ENCODE measurements at regions of chr11 and their contacts with region 1.

Region 1: GRCh38 chr11:8682303-8683114 is at the starts of genes RPL27A and TRIM66:
- DNase-seq: peak; percentile 95 to 99
- H3K4me3 ChIP-seq: peak within 1 kb of the TSS; percentile 86 to 91
- H3K27ac ChIP-seq: peak within 1 kb of the TSS; percentile 91 to 97
- H3K4me1 ChIP-seq: peaks cover 4 to 28% (median 21%) of the 10 kb centered on the region in 4 donors
- H3K27me3 ChIP-seq: no peaks in the 10 kb centered on the region
- CTCF ChIP-seq: peak in 1 of 2 experiments; percentile 40

Region 2: GRCh38 chr11:8138526-8138925 is 544.0 kb before region 1 on chr11:
- intact Hi-C with region 1: no loop called
- DNase-seq: no peak
- H3K4me3 ChIP-seq: no peak overlapping the region
- H3K27ac ChIP-seq: no peak overlapping the region
- H3K4me1 ChIP-seq: no peaks in the 10 kb centered on the region
- H3K27me3 ChIP-seq: no peaks in the 10 kb centered on the region
- CTCF ChIP-seq: no peak

Region 3: GRCh38 chr11:8566613-8567210 is 115.8 kb before region 1 on chr11:
- intact Hi-C with region 1: no loop called
- DNase-seq: no peak
- H3K4me3 ChIP-seq: no peak overlapping the region
- H3K27ac ChIP-seq: no peak overlapping the region
- H3K4me1 ChIP-seq: no peaks in the 10 kb centered on the region
- H3K27me3 ChIP-seq: peaks cover 0 to 10% of the 10 kb centered on the region in 2 donors
- CTCF ChIP-seq: peak; percentile 60 to 74

Region 4: DNA sequence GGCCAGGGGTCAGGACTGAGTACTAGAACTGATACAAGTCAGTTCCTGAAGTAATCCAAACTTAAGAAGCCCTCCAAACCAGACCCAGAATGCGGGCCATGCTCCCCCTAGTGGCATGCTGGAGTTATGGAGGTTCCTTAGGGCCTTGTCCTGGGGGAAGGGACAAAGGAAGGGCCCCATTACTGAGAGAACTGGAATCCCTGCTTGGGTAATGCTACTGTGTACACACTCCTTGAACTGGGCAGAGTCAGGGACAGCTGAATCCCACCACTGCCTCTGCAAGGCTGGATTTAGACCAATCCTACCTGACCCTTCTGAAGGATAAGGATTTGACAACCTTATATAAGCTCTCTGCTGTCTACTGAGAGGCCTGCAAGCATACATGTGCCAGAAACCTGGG is 131.1 kb after region 1 on chr11:
- intact Hi-C with region 1: loop called (anchors 5 kb)
- DNase-seq: peak; percentile 60 to 87
- H3K4me3 ChIP-seq: no peak overlapping the region
- H3K27ac ChIP-seq: peak overlapping the region; percentile 15 to 91
- H3K4me1 ChIP-seq: peaks cover 0 to 39% (median 28%) of the 10 kb centered on the region in 4 donors
- H3K27me3 ChIP-seq: no peaks in the 10 kb centered on the region
- CTCF ChIP-seq: peak; percentile 75 to 87